ENCODE measurements at regions of chr2 and their contacts with region 1.

Region 1: GRCh38 chr2:144529841-144530240 is 9.9 kb upstream of the ZEB2 start:
- DNase-seq: no peak
- ATAC-seq: peak; percentile 64 to 82 (median 72)
- H3K4me3 ChIP-seq: no peak overlapping the region
- H3K27ac ChIP-seq: no peak overlapping the region
- H3K4me1 ChIP-seq: peaks cover 0 to 17% (median 0%) of the 10 kb centered on the region in 12 donors
- H3K27me3 ChIP-seq: no peaks in the 10 kb centered on the region
- CTCF ChIP-seq: no peak
- POLR2A ChIP-seq: no peak

Region 2: DNA sequence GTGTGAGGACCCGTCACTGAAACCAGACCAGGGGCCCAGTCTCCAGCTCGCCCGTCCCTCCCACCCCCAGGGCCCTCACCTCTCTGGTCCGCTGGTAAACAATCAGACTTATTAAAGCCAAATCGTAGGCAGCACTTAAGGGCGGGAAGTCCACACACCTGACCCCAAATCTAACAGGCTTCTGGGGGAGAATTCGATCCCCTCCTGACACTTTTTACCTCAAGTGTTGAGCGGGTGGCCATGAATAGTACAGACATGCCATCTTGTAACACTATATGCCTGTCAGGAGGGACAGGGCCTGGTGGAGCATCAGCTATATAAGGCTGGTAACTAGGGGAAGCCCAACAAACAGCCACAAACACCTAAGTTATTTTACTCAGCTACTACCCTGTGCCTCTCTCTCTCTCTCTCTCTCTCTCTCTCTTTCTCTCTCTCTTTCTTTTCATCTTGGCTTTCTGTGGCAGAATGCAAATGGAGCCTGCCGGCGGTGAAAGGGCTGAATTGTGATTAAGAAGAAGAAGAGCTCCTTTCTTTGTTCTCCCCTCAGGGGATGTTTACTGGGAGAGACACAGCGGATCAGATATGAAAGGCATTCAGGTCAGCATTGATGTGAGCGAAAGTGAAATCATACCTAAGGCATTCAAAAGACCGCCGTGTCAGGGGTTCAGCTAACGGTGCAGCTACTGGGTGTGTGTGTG is 19.4 kb before region 1 on chr2:
- intact Hi-C with region 1: no loop called
- DNase-seq: peak in 3 of 5 donors; percentile 40 to 73 (median 63)
- ATAC-seq: peak; percentile 78 to 85 (median 81)
- H3K4me3 ChIP-seq: peak overlapping the region in 11 of 12 donors; percentile 10 to 96 (median 81)
- H3K27ac ChIP-seq: peak overlapping the region; percentile 90 to 99 (median 98)
- H3K4me1 ChIP-seq: peaks cover 0 to 89% (median 57%) of the 10 kb centered on the region in 12 donors
- H3K27me3 ChIP-seq: no peaks in the 10 kb centered on the region
- CTCF ChIP-seq: no peak
- POLR2A ChIP-seq: peak in 1 of 2 donors; percentile 15

Region 3: GRCh38 chr2:144712550-144712940 is 182.7 kb after region 1 on chr2:
- intact Hi-C with region 1: loop called in 1 of 10 experiments (anchors 5 kb)
- DNase-seq: no peak
- ATAC-seq: no peak
- H3K4me3 ChIP-seq: no peak overlapping the region
- H3K27ac ChIP-seq: peak overlapping the region in 1 of 12 donors; percentile 8
- H3K4me1 ChIP-seq: peaks cover 0 to 19% (median 9%) of the 10 kb centered on the region in 12 donors
- H3K27me3 ChIP-seq: no peaks in the 10 kb centered on the region
- CTCF ChIP-seq: no peak
- POLR2A ChIP-seq: no peak

Region 4: GRCh38 chr2:144780983-144781382 is 251.1 kb after region 1 on chr2:
- intact Hi-C with region 1: no loop called
- DNase-seq: no peak
- ATAC-seq: no peak
- H3K4me3 ChIP-seq: no peak overlapping the region
- H3K27ac ChIP-seq: no peak overlapping the region
- H3K4me1 ChIP-seq: no peaks in the 10 kb centered on the region
- H3K27me3 ChIP-seq: no peaks in the 10 kb centered on the region
- CTCF ChIP-seq: no peak
- POLR2A ChIP-seq: no peak

Measured in heart left ventricle (tissue), 16 donors.